ENCODE measurements at regions of chr11 and their contacts with region 1.

Region 1: DNA sequence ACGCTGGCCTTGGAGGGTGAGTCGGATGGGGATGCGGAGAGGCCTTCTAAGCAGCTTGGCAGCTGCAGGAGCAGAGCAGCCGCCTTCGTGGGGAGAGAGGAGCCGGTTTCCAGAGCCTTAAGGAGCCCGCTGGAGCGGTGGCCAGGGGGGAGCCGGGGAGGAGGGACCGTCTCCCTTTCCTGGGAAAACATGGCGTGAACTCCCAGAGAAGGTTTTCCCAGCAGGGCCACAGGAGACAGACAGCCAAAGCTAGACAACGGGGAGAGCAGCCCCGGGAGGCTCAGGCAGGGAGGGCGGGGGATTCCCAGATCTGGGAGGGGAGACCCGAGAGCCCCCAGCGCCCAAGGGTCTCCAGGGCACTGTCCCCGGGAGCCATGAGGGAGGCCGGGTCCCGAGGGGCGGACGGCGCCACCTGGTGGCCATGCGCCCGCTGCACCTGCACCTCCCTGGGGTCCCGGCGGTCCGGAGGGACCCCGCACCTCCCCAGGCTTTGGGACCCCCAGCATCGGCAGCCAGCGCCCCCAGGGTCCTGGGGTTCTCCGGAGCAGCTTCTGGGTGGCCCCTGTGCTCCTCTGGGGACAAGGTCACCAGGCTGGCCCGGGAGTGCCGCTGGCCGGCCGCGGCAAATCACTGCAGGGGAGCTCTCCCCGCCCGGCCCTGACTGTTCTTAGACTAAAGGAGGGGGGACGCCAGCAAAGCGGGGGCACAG is 2.4 kb upstream of the SYT8 start:
- DNase-seq: no peak
- ATAC-seq: peak; percentile 56
- H3K4me3 ChIP-seq: peak overlapping the region; percentile 17 to 40; a peak in 3 of 4 replicates
- H3K27ac ChIP-seq: peak overlapping the region; percentile 99
- H3K4me1 ChIP-seq: peaks cover 85% of the 10 kb centered on the region
- H3K27me3 ChIP-seq: no peaks in the 10 kb centered on the region
- CTCF ChIP-seq: peak; percentile 100

Region 2: DNA sequence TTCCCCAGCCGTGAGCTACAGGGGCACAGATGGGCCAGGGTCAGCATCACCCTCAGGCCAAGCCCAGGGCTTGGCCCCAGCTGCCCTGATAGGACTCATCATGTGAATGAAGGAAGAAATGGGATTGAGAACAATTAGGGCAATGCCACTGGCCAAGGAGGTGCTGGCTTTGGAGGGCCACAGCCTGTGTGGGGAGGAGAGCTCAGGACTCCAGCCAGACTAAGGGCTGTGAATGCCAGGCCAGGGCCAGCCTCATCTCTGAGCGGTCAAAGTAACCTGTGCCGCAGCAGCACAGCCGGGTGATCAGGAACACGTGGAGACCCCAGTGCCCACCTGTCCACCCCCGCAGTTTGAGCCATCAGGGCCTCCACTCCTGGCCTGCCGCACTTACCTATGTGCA is 931.8 kb before region 1 on chr11:
- CTCF ChIA-PET with region 1: no interaction called
- POLR2A ChIA-PET with region 1: no interaction called
- in situ Hi-C with region 1: no loop called
- intact Hi-C with region 1: no loop called
- DNase-seq: no peak
- ATAC-seq: no peak
- H3K4me3 ChIP-seq: no peak overlapping the region
- H3K27ac ChIP-seq: no peak overlapping the region
- H3K4me1 ChIP-seq: no peaks in the 10 kb centered on the region
- H3K27me3 ChIP-seq: no peaks in the 10 kb centered on the region
- CTCF ChIP-seq: no peak

Region 3: GRCh38 chr11:1652771-1653540 is 179.4 kb before region 1 on chr11:
- CTCF ChIA-PET with region 1: interaction called, 79 read pairs
- POLR2A ChIA-PET with region 1: no interaction called
- in situ Hi-C with region 1: no loop called
- intact Hi-C with region 1: loop called (anchors 5 kb)
- DNase-seq: no peak
- ATAC-seq: peak; percentile 88
- H3K4me3 ChIP-seq: no peak overlapping the region
- H3K27ac ChIP-seq: no peak overlapping the region
- H3K4me1 ChIP-seq: 0 out of 2 replicates have a peak, but pooled peaks cover 2% of the 10 kb centered on the region
- H3K27me3 ChIP-seq: no peaks in the 10 kb centered on the region
- CTCF ChIP-seq: peak; percentile 99

Region 4: DNA sequence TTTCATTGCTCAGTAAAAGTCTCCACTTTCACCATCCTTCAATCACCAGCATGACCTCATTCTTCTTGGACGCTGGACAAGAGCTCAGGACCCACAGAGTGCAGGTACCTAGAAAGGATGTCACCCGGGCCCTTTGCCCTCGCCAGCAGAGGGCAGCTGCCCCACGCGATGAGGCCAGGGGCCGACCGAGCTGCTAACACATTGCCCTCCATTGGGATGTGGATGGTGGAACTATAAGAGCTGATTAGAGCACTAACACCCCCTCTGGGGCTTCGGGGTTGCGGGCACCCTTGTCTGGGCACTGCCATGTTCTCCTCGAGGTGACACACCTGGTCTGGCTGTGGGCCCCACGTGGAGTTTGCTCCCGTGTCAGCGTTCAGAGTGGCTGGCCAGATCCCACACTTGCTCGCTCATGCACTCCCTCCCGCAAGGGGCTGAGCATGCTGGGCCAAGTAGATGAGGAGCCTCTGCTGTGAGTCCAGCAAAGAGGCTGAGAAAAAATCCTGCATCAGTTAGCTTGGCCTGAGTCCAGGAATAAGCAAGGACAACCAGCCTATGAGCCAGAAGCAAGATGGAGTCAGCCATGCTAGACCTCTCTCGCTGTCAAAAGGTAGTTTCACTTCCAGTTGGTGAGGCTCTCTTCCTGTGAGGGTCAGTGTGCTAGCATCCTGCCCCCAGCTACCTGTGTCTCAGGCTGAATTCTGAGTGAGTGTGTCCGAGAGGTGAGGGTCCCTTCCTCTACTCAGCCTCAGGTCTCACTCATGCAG is 125.5 kb before region 1 on chr11:
- CTCF ChIA-PET with region 1: interaction called, 25 read pairs
- POLR2A ChIA-PET with region 1: no interaction called
- in situ Hi-C with region 1: no loop called
- intact Hi-C with region 1: no loop called
- DNase-seq: no peak
- ATAC-seq: peak; percentile 85
- H3K4me3 ChIP-seq: no peak overlapping the region
- H3K27ac ChIP-seq: no peak overlapping the region
- H3K4me1 ChIP-seq: no peaks in the 10 kb centered on the region
- H3K27me3 ChIP-seq: no peaks in the 10 kb centered on the region
- CTCF ChIP-seq: peak; percentile 78; the same call in 1 of the 2 replicates

Region 5: DNA sequence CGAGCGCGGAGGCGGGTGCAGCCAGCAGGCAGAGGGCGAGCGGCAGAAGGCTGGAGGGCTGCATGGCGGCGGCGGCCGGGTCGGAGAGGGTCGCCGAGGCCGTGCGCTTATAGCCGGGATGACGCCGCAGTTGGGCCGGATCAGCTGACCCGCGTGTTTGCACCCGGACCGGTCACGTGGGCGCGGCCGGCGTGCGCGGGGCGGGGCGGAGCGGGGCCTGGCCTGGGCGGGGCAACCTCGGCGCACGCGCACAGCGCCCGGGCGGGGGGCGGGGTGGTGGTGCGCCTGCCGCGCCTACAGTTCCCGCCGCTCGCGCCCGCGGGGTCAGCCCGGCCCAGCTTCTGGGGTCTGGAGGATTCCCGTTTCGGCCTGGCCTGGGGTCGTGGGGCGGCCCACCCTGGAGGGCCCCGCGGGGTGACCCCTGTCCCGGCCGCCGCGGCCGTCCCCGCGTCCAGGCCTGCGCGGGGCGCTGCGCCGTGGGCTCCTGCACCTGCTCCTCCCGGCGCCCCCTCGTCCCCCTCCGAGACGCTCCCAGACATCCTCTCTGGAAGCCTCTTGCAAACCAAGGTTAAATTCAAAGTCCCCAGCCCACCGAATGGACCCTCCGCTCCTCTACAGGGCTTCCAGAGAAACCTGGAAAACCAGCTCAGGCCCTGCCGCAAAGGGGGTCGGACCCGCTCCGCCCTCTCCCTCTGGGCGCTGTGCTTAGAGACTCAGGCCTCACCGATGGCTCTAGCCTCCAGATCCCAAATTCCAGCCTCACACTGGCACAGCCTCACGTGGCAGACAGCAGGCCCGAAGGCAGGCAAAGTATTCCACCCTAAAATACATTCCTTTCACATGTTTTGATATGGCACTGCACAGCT is 68.3 kb before region 1 on chr11 and contains the start of gene CTSD:
- CTCF ChIA-PET with region 1: interaction called, 3 read pairs
- POLR2A ChIA-PET with region 1: no interaction called
- in situ Hi-C with region 1: no loop called
- intact Hi-C with region 1: loop called (anchors 5 kb)
- DNase-seq: no peak
- ATAC-seq: peak; percentile 73
- H3K4me3 ChIP-seq: peak within 1 kb of the TSS; percentile 88 to 90
- H3K27ac ChIP-seq: peak within 1 kb of the TSS; percentile 94
- H3K4me1 ChIP-seq: peaks cover 69% of the 10 kb centered on the region
- H3K27me3 ChIP-seq: no peaks in the 10 kb centered on the region
- CTCF ChIP-seq: no peak; the same call in 1 of the 2 replicates
- total RNA-seq, gene CTSD: 1,813 TPM

Region 6: DNA sequence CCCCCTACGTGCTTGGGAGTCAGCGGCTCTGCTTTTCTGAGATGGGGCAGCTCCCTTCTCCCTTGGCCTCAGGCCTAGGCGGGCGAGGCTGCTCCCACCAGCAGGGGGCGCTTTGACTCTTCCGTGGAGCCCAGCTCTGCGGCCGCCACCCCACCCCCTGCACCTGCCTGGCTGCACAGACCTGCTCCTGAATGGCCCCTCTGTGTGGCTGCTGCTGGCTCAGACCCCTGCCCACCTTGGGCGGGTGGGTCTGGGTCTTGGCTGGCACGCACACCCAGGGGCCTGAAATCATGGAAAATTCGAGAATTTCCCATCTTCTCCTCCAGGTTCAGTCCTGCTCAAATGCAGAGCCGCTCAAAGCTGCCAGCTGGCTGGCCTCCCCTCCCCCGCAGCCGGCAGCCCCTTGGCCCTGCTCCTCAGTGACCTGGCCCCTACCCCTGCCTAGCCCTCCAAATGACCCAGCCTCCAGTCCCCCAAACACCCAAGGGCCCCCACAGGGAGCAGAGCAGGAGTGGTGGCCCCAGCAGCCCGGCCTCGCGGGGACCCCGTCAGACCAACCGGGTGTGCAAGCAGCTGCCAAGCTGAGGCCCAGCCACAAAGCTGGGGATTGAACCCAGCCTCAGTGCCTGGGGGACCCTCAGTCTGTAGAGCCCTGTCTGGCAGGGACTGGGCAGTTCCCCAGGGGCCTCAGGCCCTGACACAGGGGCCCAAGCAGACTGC is 50.3 kb after region 1 on chr11:
- CTCF ChIA-PET with region 1: interaction called, 15 read pairs
- POLR2A ChIA-PET with region 1: no interaction called
- in situ Hi-C with region 1: no loop called
- intact Hi-C with region 1: no loop called
- DNase-seq: peak; percentile 22
- ATAC-seq: peak; percentile 93
- H3K4me3 ChIP-seq: no peak overlapping the region
- H3K27ac ChIP-seq: no peak overlapping the region
- H3K4me1 ChIP-seq: peaks cover 2% of the 10 kb centered on the region; the same call in 1 of the 2 replicates
- H3K27me3 ChIP-seq: no peaks in the 10 kb centered on the region
- CTCF ChIP-seq: peak; percentile 100

Region 7: GRCh38 chr11:2002807-2003206 is 170.4 kb after region 1 on chr11:
- CTCF ChIA-PET with region 1: interaction called, 20 read pairs
- POLR2A ChIA-PET with region 1: no interaction called
- in situ Hi-C with region 1: no loop called
- intact Hi-C with region 1: no loop called
- DNase-seq: no peak
- ATAC-seq: peak; percentile 64
- H3K4me3 ChIP-seq: no peak overlapping the region
- H3K27ac ChIP-seq: no peak overlapping the region
- H3K4me1 ChIP-seq: no peaks in the 10 kb centered on the region
- H3K27me3 ChIP-seq: no peaks in the 10 kb centered on the region
- CTCF ChIP-seq: no peak

Region 8: GRCh38 chr11:2269601-2270321 is 437.4 kb after region 1 on chr11:
- CTCF ChIA-PET with region 1: no interaction called
- POLR2A ChIA-PET with region 1: no interaction called
- in situ Hi-C with region 1: no loop called
- intact Hi-C with region 1: no loop called
- DNase-seq: no peak
- ATAC-seq: no peak
- H3K4me3 ChIP-seq: peak overlapping the region; percentile 49 to 66
- H3K27ac ChIP-seq: no peak overlapping the region
- H3K4me1 ChIP-seq: no peaks in the 10 kb centered on the region
- H3K27me3 ChIP-seq: peaks cover 5% of the 10 kb centered on the region
- CTCF ChIP-seq: no peak

Measured in Panc1 (cell line).